ENCODE measurements at regions of chr17 and their contacts with region 1.

Region 1: GRCh38 chr17:78497115-78497540 is 80.1 kb downstream of the DNAH17 start:
- DNase-seq: peak; percentile 74 to 92 (median 82)
- H3K4me3 ChIP-seq: no peak overlapping the region
- H3K27ac ChIP-seq: no peak overlapping the region
- H3K4me1 ChIP-seq: no peaks in the 10 kb centered on the region
- H3K27me3 ChIP-seq: no peaks in the 10 kb centered on the region
- CTCF ChIP-seq: peak; percentile 59 to 90 (median 82)
- POLR2A ChIP-seq: no peak

Region 2: GRCh38 chr17:78708510-78708973 is 211.4 kb after region 1 on chr17:
- intact Hi-C with region 1: loop called (anchors 2 to 10 kb)
- DNase-seq: peak; percentile 65 to 87 (median 75)
- H3K4me3 ChIP-seq: no peak overlapping the region
- H3K27ac ChIP-seq: peak overlapping the region in 1 of 5 donors; percentile 34
- H3K4me1 ChIP-seq: peaks cover 0 to 26% of the 10 kb centered on the region in 2 donors
- H3K27me3 ChIP-seq: no peaks in the 10 kb centered on the region
- CTCF ChIP-seq: peak; percentile 79 to 89 (median 86)
- POLR2A ChIP-seq: no peak

Region 3: GRCh38 chr17:78716814-78717393 is 219.8 kb after region 1 on chr17:
- intact Hi-C with region 1: loop called in 1 of 2 experiments (anchors 10 kb)
- DNase-seq: peak; percentile 84 to 93 (median 88)
- H3K4me3 ChIP-seq: peak overlapping the region in 2 of 4 donors; percentile 16 to 59
- H3K27ac ChIP-seq: peak overlapping the region in 3 of 5 donors; percentile 62 to 85 (median 69)
- H3K4me1 ChIP-seq: peaks cover 27 to 38% of the 10 kb centered on the region in 2 donors
- H3K27me3 ChIP-seq: no peaks in the 10 kb centered on the region
- CTCF ChIP-seq: peak in 2 of 6 experiments; percentile 8 to 12
- POLR2A ChIP-seq: peak in 1 of 2 donors; percentile 57

Region 4: GRCh38 chr17:78806451-78806850 is 309.3 kb after region 1 on chr17:
- intact Hi-C with region 1: loop called in 1 of 2 experiments (anchors 10 kb)
- DNase-seq: no peak
- H3K4me3 ChIP-seq: no peak overlapping the region
- H3K27ac ChIP-seq: peak overlapping the region in 1 of 5 donors; percentile 17
- H3K4me1 ChIP-seq: peaks cover 0 to 3% of the 10 kb centered on the region in 2 donors
- H3K27me3 ChIP-seq: no peaks in the 10 kb centered on the region
- CTCF ChIP-seq: no peak
- POLR2A ChIP-seq: no peak

Region 5: DNA sequence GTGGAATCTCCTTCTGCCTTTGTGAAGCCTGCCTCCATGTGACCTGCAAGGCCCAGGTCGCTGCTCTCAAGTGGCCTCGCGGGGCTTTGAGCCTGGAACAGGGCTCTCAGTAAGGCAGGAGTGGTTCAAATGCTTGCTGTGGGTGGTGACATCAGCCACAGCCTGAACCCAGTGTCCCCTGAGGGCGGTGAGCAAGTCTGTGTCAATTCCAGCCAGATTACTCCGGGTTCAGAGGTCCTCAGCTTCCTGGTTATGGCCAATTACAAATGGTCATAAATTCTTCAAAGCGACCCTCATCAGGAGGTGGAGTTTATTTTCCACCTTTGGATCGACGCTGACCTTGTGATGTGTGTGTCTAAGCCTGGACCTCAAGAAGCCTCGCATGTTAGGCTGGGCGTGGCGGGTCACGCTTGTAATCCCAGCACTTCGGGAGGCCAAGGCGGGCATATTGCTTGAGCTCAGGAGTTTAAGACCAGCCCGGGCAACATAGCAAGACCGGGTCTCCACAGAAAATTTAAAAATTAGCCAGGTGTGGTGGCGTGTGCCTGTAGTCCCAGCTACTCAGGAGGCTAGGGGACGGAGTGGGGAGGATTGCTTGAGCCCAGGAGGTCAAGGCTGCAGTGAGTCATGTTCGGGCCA is 465.3 kb after region 1 on chr17:
- intact Hi-C with region 1: loop called in 1 of 2 experiments (anchors 10 kb)
- DNase-seq: no peak
- H3K4me3 ChIP-seq: no peak overlapping the region
- H3K27ac ChIP-seq: no peak overlapping the region
- H3K4me1 ChIP-seq: no peaks in the 10 kb centered on the region
- H3K27me3 ChIP-seq: no peaks in the 10 kb centered on the region
- CTCF ChIP-seq: no peak
- POLR2A ChIP-seq: no peak